CD14-positive monocyte (primary cell): ENCODE measurements at regions of chr1 and their contacts with region 1.

Region 1: DNA sequence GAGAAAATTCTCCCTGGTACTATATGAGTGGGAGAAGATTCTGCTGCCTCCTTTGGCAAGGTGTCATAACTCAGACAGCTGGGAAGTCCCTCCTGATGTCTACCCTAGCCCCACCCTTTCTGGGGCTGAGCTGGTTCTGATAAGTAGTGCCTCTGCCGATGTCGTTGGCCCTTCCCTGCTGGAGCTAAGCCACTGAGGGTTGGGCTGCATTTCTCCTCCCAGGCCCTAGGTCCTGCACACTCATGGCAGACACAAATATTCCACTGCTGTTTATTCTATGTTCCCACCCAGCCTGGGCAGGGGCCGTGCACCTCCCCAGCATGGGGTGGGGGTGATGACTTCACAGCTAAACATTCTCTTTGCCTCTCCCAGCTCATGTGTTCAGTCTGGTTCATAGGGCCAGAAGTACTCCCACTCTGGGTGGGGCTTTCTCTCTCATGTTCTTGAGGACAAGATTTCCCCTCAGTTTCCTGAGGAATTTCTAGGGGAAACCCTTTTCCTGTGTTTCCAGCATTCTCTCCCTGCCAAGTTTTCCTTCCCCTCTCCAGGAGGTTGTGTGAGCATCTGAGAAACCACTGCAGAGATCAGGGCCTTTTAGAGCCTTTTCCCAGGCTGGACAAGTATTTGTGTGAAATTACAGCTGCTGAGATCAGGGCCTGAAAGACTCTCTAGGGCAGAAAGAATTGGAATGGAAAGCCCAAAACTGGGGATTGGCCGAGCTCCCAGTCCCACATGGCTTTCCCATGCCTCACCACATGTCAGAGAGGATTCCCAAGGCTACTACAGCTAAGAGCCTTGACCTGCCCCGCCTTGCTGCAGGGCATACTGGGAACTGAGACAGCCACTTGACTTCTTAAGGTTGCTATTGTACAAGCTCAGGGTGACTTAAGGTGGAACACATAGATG is 66.2 kb downstream of the ATP2B4 start:
- DNase-seq: no peak
- H3K4me3 ChIP-seq: no peak overlapping the region
- H3K4me3 Mint-ChIP-seq: no peak overlapping the region
- H3K27ac ChIP-seq: peak overlapping the region in 1 of 2 donors; percentile 58
- H3K27ac Mint-ChIP-seq: peak overlapping the region in 5 of 7 donors; percentile 6 to 69 (median 30)
- H3K4me1 ChIP-seq: no peaks in the 10 kb centered on the region
- H3K4me1 Mint-ChIP-seq: peaks cover 13% of the 10 kb centered on the region
- H3K27me3 ChIP-seq: no peaks in the 10 kb centered on the region
- H3K27me3 Mint-ChIP-seq: peaks cover 0 to 2% (median 0%) of the 10 kb centered on the region in 3 donors
- CTCF ChIP-seq: no peak

Region 2: DNA sequence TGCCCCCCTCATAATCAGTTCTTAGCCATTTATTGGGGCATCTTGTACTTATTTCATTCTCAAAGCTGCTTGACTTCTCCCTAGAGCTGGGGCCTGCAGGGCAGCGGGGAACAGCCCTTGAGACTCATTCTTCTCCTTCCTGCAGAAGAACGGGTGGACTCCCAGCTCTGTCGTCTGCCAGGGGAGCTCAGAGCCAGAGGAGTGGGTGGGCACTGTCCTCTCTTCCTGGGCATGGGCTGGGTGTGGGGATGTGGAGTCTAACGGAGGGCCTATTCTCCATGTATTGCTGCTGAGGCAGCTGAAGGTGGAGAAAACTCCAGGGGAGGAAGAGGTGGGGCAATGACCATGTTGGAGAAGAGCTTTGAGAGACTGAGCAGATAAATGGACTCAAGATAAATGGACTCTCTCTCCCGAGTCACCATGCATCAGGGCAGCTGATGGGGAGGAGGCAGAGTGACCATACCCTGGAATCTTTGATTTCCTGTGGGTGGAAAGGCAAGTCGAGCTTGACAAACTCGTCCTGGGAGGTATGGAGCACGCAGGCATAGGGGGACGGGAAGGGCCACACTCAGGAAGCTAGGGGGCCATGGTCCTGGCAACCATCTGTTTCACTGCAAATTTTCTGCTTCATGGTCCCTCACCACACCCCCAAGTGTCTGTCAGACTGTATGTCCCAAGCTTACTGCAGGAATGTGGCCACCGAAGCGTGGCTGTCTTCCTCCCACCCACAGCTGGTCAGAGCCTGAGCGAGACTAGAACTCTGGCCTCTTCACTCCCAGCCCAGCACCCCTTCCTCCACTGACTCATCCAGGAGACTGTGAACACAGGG is 123.1 kb before region 1 on chr1:
- intact Hi-C with region 1: no loop called
- DNase-seq: no peak
- H3K4me3 ChIP-seq: no peak overlapping the region
- H3K4me3 Mint-ChIP-seq: no peak overlapping the region
- H3K27ac ChIP-seq: no peak overlapping the region
- H3K27ac Mint-ChIP-seq: no peak overlapping the region
- H3K4me1 ChIP-seq: no peaks in the 10 kb centered on the region
- H3K4me1 Mint-ChIP-seq: no peaks in the 10 kb centered on the region
- H3K27me3 ChIP-seq: no peaks in the 10 kb centered on the region
- H3K27me3 Mint-ChIP-seq: peaks cover 4 to 12% (median 6%) of the 10 kb centered on the region in 3 donors
- CTCF ChIP-seq: no peak

Region 3: DNA sequence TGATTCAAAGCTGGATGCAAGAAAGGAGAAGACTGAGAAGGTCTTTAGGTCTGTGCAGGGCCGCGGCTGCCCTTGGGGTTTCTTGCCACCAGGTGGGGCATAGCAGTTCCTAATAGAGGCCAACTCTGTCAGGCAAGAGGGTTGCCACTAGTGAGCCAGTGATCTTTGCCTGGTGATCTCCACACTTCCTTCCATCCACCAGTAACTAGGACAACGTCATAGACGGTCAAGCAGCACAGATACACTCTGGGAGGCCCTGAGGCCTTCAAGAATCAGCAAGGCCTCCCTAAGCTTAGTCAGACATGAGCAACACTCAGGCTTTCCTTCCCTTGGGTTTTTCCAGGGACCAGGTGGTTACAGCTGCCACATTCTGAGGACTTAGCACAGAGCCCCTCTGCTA is 99.1 kb before region 1 on chr1:
- intact Hi-C with region 1: loop called in 1 of 2 experiments (anchors 10 kb)
- DNase-seq: peak; percentile 33 to 79 (median 46)
- H3K4me3 ChIP-seq: no peak overlapping the region
- H3K4me3 Mint-ChIP-seq: no peak overlapping the region
- H3K27ac ChIP-seq: no peak overlapping the region
- H3K27ac Mint-ChIP-seq: peak overlapping the region in 5 of 7 donors; percentile 40 to 93 (median 88)
- H3K4me1 ChIP-seq: peaks cover 20 to 21% of the 10 kb centered on the region in 2 donors
- H3K4me1 Mint-ChIP-seq: peaks cover 28% of the 10 kb centered on the region
- H3K27me3 ChIP-seq: no peaks in the 10 kb centered on the region
- H3K27me3 Mint-ChIP-seq: peaks cover 1 to 7% (median 1%) of the 10 kb centered on the region in 3 donors
- CTCF ChIP-seq: peak; percentile 48

Region 4: DNA sequence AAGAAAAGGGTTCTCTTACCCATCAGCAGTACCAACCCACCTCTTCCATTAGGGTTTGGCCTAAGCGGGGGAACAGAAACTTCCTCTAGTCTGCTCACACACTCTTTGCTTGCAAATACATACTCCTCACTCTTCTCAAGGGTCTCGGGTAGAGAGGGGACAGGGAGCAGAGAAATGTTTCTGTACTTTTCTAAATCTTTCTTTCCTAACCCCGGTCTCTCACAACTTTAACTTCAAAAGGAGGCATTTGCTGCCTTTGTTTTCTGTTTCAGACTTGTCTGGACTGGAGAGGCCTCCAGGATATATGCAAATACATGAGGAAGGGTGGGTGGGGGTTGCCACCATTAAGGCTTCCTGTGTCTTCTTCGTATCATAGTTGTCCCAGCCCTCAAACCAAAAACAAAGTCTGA is 61.6 kb after region 1 on chr1:
- intact Hi-C with region 1: loop called in 1 of 2 experiments (anchors 10 kb)
- DNase-seq: no peak
- H3K4me3 ChIP-seq: no peak overlapping the region
- H3K4me3 Mint-ChIP-seq: no peak overlapping the region
- H3K27ac ChIP-seq: no peak overlapping the region
- H3K27ac Mint-ChIP-seq: peak overlapping the region in 3 of 7 donors; percentile 13 to 50 (median 38)
- H3K4me1 ChIP-seq: no peaks in the 10 kb centered on the region
- H3K4me1 Mint-ChIP-seq: peaks cover 8% of the 10 kb centered on the region
- H3K27me3 ChIP-seq: no peaks in the 10 kb centered on the region
- H3K27me3 Mint-ChIP-seq: no peaks in the 10 kb centered on the region
- CTCF ChIP-seq: no peak